ENCODE measurements at regions of chr3 and their contacts with region 1.

Region 1: GRCh38 chr3:66500576-66501482 is at the start of gene LRIG1:
- DNase-seq: peak; percentile 92 to 97
- ATAC-seq: peak; percentile 94 to 98 (median 95)
- H3K4me3 ChIP-seq: peak within 1 kb of the TSS; percentile 52
- H3K4me3 Mint-ChIP-seq: peak within 1 kb of the TSS; percentile 88
- H3K27ac ChIP-seq: no peak within 1 kb of the TSS
- H3K27ac Mint-ChIP-seq: peak within 1 kb of the TSS; percentile 70 to 82
- H3K4me1 ChIP-seq: peaks cover 17% of the 10 kb centered on the region
- H3K4me1 Mint-ChIP-seq: peaks cover 24 to 37% of the 10 kb centered on the region in 2 donors
- H3K27me3 ChIP-seq: peaks cover 3% of the 10 kb centered on the region
- H3K27me3 Mint-ChIP-seq: peaks cover 16 to 26% of the 10 kb centered on the region in 2 donors
- CTCF ChIP-seq: peak; percentile 54
- total RNA-seq, gene LRIG1: 5.5 to 10.6 (median 8.5) TPM

Region 2: DNA sequence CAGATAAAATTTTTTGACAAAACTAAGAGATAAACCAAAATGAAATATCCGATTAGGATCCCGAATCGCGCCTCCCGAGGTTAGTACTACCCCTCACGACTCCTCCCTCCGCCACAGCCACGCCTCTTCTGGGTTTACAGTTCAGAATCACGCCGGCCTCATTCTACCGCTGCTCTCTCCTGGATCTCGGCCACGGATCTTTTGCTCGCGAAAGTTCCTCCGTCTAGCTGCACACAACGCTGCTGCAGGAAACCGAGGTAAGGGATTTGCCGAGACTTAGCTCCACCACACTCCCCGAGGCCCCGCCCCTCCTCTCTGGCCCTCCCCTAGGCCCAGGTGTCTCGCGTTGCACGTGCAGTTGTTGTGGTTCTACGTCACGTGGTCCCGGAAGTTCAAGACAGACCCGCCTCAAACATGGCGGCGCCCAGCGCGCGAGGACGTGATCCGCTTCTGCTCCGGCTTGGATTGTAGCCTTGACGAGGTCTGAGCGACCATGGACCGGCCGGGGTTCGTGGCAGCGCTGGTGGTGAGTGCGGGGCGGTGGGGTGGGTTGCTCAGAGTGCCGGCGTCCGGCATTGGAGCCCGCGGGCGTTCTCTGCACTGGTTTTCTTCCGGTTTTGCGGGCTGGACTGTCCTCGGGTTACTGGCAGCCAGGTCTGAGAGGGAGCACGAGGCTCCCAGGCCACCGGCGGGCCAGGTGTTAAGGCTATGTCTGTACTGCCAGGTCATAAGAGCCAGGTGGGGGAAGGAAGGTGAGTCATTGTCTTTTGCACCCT is 280.0 kb before region 1 on chr3 and contains the start of gene SLC25A26:
- intact Hi-C with region 1: loop called (anchors 2 kb)
- DNase-seq: peak; percentile 91 to 99
- ATAC-seq: peak; percentile 94 to 97 (median 95)
- H3K4me3 ChIP-seq: peak within 1 kb of the TSS; percentile 83
- H3K4me3 Mint-ChIP-seq: peak within 1 kb of the TSS; percentile 98
- H3K27ac ChIP-seq: peak within 1 kb of the TSS; percentile 70
- H3K27ac Mint-ChIP-seq: peak within 1 kb of the TSS; percentile 90 to 94
- H3K4me1 ChIP-seq: peaks cover 3% of the 10 kb centered on the region
- H3K4me1 Mint-ChIP-seq: peaks cover 19 to 21% of the 10 kb centered on the region in 2 donors
- H3K27me3 ChIP-seq: no peaks in the 10 kb centered on the region
- H3K27me3 Mint-ChIP-seq: peaks cover 5 to 16% of the 10 kb centered on the region in 2 donors
- CTCF ChIP-seq: no peak
- total RNA-seq, gene SLC25A26: 18.4 to 23.9 (median 23.3) TPM

Region 3: DNA sequence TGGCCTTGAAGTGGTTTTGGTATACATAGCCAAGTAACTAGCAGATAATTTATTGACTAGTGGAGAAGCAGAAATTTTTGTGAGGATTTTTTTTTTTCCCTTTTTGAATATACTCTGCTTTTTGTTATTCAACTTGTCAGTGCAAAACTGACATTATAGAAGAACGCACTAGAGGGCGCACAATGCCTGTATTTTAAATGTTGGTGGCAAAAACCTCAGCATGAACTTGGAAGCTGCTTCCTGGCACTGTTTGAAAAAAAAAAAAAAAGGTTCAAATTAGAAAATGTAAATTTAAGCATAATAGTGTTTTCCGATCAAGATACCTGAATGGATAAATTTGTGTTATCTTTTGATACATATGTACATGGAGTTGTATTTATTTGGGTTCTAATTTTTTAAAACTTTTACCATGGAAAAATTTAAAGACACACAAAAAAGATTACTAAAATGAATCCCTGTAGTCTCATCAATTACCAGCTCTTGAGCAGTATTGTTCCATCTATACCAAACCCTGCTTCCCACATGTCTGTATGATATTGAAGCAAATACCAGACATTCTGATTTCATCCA is 224.0 kb before region 1 on chr3:
- intact Hi-C with region 1: loop called (anchors 5 kb)
- DNase-seq: peak; percentile 27 to 86
- ATAC-seq: peak in 2 of 3 donors; percentile 60 to 86
- H3K4me3 ChIP-seq: no peak overlapping the region
- H3K4me3 Mint-ChIP-seq: no peak overlapping the region
- H3K27ac ChIP-seq: no peak overlapping the region
- H3K27ac Mint-ChIP-seq: peak overlapping the region; percentile 17 to 72
- H3K4me1 ChIP-seq: peaks cover 4% of the 10 kb centered on the region
- H3K4me1 Mint-ChIP-seq: peaks cover 33 to 38% of the 10 kb centered on the region in 2 donors
- H3K27me3 ChIP-seq: no peaks in the 10 kb centered on the region
- H3K27me3 Mint-ChIP-seq: no peaks in the 10 kb centered on the region
- CTCF ChIP-seq: peak; percentile 79

Region 4: GRCh38 chr3:66450390-66451022 is 50.3 kb before region 1 on chr3:
- intact Hi-C with region 1: loop called (anchors 10 kb)
- DNase-seq: no peak
- ATAC-seq: no peak
- H3K4me3 ChIP-seq: no peak overlapping the region
- H3K4me3 Mint-ChIP-seq: no peak overlapping the region
- H3K27ac ChIP-seq: no peak overlapping the region
- H3K27ac Mint-ChIP-seq: no peak overlapping the region
- H3K4me1 ChIP-seq: no peaks in the 10 kb centered on the region
- H3K4me1 Mint-ChIP-seq: peaks cover 0 to 3% of the 10 kb centered on the region in 2 donors
- H3K27me3 ChIP-seq: no peaks in the 10 kb centered on the region
- H3K27me3 Mint-ChIP-seq: peaks cover 10 to 21% of the 10 kb centered on the region in 2 donors
- CTCF ChIP-seq: no peak

Region 5: DNA sequence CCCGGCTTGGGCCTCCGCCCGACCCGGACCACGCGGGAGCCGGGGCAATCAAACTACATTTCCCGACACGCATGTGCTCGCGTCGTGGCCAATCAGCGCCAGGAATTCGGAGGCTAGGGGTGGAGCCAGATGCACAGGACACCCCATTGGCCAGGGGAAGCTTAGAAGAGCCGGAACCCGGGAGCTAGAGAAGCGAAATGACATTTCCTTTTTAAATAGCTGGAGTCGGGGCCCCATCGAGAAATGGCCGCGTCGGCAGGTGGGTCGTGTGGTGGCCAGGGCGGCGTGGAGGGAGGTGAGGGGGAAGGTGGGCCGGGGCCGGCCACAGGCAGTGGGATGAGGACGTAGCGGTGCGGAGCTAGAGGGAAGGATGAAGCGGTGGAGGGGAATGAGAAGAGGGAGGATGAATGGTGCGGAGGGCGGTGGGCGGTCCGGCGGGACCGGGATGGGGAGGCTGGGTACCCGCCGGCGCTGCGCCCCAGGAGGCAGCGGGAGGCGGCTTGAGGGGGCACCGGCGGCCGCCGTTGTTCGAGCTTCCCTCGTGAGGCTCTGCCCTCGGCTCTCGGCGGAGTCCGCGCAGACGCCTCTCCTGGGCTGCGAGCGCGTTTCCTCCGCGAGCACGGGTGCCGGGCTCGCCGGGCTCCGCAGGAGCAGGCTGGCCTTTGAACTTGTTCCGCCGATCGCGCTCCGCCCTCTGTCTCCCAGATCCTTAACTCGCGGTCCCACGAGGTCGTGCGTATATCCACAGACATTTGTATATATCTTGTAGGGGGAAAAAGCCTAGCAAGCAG is 497.5 kb after region 1 on chr3 and contains the start of gene KBTBD8:
- intact Hi-C with region 1: loop called (anchors 5 kb)
- DNase-seq: peak; percentile 87 to 99
- ATAC-seq: peak; percentile 93 to 98 (median 95)
- H3K4me3 ChIP-seq: peak within 1 kb of the TSS; percentile 80
- H3K4me3 Mint-ChIP-seq: peak within 1 kb of the TSS; percentile 97
- H3K27ac ChIP-seq: peak within 1 kb of the TSS; percentile 71
- H3K27ac Mint-ChIP-seq: peak within 1 kb of the TSS; percentile 84 to 89
- H3K4me1 ChIP-seq: peaks cover 12% of the 10 kb centered on the region
- H3K4me1 Mint-ChIP-seq: peaks cover 17 to 23% of the 10 kb centered on the region in 2 donors
- H3K27me3 ChIP-seq: peaks cover 6% of the 10 kb centered on the region
- H3K27me3 Mint-ChIP-seq: peaks cover 10 to 17% of the 10 kb centered on the region in 2 donors
- CTCF ChIP-seq: no peak
- total RNA-seq, gene KBTBD8: 8.6 to 11.8 (median 10.8) TPM

Measured in natural killer cell (primary cell).